Testis (tissue), 5 donors: ENCODE measurements at regions of chr11 and their contacts with region 1.

Region 1: DNA sequence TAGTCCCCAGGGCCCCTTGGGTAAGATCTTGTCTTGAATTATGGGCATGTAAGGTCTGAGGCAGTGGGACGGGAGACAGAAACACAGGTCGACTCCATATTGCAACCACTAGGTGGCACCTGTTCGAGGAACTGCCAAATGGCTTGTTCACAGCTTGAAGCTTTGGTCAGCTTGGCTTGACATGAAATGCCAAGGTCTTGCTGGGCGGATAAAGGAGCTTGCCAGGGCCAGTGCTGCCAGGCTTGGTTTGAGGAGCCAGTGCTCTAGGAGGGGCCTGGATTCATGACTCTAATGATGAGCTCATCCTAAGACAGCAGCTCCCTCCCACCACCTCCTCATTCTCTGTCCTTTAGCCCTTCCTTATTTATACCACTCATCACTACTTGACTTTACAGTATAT is 11.9 kb upstream of the NRIP3 start:
- DNase-seq: peak; percentile 77
- H3K4me3 ChIP-seq: no peak overlapping the region
- H3K27ac ChIP-seq: no peak overlapping the region
- H3K4me1 ChIP-seq: no peaks in the 10 kb centered on the region
- H3K27me3 ChIP-seq: no peaks in the 10 kb centered on the region
- CTCF ChIP-seq: peak; percentile 49 to 72 (median 64)
- POLR2A ChIP-seq: no peak

Region 2: GRCh38 chr11:9137293-9138132 is 121.8 kb after region 1 on chr11:
- intact Hi-C with region 1: loop called (anchors 5 kb)
- DNase-seq: peak; percentile 83
- H3K4me3 ChIP-seq: no peak overlapping the region
- H3K27ac ChIP-seq: no peak overlapping the region
- H3K4me1 ChIP-seq: peaks cover 15% of the 10 kb centered on the region
- H3K27me3 ChIP-seq: no peaks in the 10 kb centered on the region
- CTCF ChIP-seq: peak; percentile 72 to 90 (median 75)
- POLR2A ChIP-seq: no peak